ENCODE measurements at regions of chr1 and their contacts with region 1.

Region 1: DNA sequence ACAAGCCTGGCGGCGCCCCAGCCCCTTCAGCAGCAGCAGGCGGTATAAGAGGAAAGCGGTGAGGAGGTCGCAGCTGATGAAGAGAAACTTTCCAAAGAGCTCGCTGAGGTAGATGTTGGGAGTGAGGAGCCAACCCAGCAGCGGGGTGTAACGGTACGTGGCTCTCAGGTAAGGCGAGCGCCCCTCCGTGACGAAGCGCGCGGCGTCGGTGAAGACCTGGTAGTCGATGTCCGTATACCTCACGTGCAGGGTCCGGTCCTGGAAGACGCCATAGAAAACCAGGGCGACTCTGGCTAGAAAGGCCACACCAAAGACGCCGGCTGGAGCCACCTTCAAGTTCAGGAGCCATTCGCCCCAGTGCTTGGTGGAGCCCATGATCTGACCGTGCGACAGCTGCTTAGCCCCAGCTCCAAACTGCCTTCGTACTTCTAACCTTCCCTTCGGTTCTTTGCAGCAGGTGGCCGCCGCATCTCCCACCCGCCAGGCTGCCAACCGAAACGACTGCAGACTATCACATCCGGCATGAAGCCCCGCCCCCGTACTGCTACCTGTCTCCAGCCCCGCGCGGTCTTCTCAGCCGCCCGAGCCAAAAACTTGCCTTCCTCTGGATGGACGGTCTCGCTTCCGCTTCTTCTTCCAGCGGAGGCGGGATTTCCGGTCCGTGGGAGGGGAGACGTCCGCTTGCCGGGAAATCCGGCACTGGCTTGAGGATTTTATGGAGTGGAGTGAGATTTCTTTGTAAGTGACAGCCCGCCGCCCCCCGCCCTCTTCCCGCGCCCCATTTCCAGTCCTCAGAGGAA is at the start of gene PIGM:
- DNase-seq: peak; percentile 81
- ATAC-seq: peak; percentile 98
- H3K4me3 Mint-ChIP-seq: peak within 1 kb of the TSS; percentile 97
- H3K27ac Mint-ChIP-seq: peak within 1 kb of the TSS; percentile 82
- H3K4me1 Mint-ChIP-seq: peaks cover 26% of the 10 kb centered on the region
- H3K27me3 Mint-ChIP-seq: no peaks in the 10 kb centered on the region
- CTCF ChIP-seq: no peak
- total RNA-seq, gene PIGM: 4.5 and 5.3 TPM in 2 replicates

Region 2: DNA sequence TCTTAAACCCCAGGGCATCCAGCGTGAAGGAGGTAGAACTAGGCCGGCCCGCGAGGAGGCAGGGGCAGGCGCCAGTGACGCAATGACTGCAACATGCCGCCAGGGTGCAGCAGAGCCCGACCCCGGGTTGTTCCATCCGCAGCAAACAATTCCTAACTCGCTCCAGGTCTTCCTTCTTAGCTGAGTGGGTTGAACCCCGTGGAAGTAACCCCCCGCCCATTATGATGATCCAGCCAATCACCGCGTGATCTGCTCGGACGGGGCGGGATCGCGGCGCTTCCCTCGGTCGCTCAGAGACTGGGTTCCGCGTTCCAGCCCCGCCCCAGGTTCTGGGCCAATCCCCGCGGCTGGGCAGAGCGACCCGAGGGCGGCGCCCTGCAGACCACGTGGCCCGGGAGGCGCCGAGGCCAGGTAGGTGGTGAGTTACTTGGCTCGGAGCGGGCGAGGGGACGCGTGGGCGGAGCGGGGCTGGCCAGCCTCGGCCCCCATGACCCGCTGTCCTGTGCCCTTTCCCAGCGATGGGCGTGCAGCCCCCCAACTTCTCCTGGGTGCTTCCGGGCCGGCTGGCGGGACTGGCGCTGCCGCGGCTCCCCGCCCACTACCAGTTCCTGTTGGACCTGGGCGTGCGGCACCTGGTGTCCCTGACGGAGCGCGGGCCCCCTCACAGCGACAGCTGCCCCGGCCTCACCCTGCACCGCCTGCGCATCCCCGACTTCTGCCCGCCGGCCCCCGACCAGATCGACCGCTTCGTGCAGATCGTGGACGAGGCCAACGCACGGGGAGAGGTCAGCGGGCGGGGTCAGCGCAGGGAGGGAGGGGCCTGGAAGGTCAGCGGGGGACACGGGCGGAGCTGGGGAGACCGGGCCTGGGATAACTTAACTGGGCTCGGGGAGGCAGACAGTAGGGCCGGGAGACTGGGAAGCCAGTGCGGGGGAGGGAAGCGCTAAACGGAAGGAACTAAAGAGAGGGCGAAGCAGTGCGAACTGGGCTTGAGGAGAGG is 250.7 kb before region 1 on chr1 and contains the start of gene DUSP23:
- CTCF ChIA-PET with region 1: no interaction called
- POLR2A ChIA-PET with region 1: no interaction called
- intact Hi-C with region 1: loop called (anchors 1 kb)
- DNase-seq: peak; percentile 93
- ATAC-seq: peak; percentile 98
- H3K4me3 Mint-ChIP-seq: peak within 1 kb of the TSS; percentile 83
- H3K27ac Mint-ChIP-seq: peak within 1 kb of the TSS; percentile 68
- H3K4me1 Mint-ChIP-seq: peaks cover 12% of the 10 kb centered on the region
- H3K27me3 Mint-ChIP-seq: peaks cover 3% of the 10 kb centered on the region
- CTCF ChIP-seq: no peak
- total RNA-seq, gene DUSP23: 15.5 and 15.7 TPM in 2 replicates

Region 3: GRCh38 chr1:160354388-160354985 is 322.9 kb after region 1 on chr1:
- CTCF ChIA-PET with region 1: no interaction called
- POLR2A ChIA-PET with region 1: no interaction called
- intact Hi-C with region 1: no loop called
- DNase-seq: no peak
- ATAC-seq: peak; percentile 54
- H3K4me3 Mint-ChIP-seq: no peak overlapping the region
- H3K27ac Mint-ChIP-seq: no peak overlapping the region
- H3K4me1 Mint-ChIP-seq: no peaks in the 10 kb centered on the region
- H3K27me3 Mint-ChIP-seq: no peaks in the 10 kb centered on the region
- CTCF ChIP-seq: no peak

Region 4: GRCh38 chr1:160726498-160727315 is 695.1 kb after region 1 on chr1:
- CTCF ChIA-PET with region 1: no interaction called
- POLR2A ChIA-PET with region 1: no interaction called
- intact Hi-C with region 1: no loop called
- DNase-seq: peak; percentile 32
- ATAC-seq: peak; percentile 88
- H3K4me3 Mint-ChIP-seq: no peak overlapping the region
- H3K27ac Mint-ChIP-seq: no peak overlapping the region
- H3K4me1 Mint-ChIP-seq: peaks cover 10% of the 10 kb centered on the region
- H3K27me3 Mint-ChIP-seq: no peaks in the 10 kb centered on the region
- CTCF ChIP-seq: peak; percentile 83

Measured in activated B cell treated with CpG ODN at 0.5 μM for 24 hours (primary cell).